A673 (cell line): ENCODE measurements at regions of chr21 and their contacts with region 1.

Region 1: DNA sequence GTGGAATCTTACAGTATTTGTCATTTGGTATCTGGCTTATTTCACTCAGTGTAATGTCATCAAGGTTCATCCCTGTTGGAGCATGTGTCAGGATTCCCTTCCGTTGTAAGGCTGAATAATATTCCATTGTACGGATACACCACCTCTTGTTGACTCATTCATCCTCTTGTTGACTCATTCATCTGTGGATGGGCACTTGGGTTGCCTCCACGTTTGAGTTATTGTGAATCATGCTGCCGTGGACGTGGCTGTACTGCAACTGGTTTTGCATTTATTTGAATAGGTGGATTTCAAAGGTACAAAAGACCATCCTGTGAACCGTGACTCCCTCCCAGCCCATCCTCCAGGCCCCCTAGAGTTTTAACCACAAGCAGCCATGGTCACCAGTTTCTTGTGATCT is 11.9 kb upstream of the TCP10L start:
- DNase-seq: peak; percentile 8
- H3K4me3 ChIP-seq: no peak overlapping the region
- H3K27ac ChIP-seq: no peak overlapping the region
- H3K4me1 ChIP-seq: no peaks in the 10 kb centered on the region
- H3K27me3 ChIP-seq: no peaks in the 10 kb centered on the region
- CTCF ChIP-seq: no peak

Region 2: GRCh38 chr21:32359711-32360260 is 237.4 kb before region 1 on chr21:
- CTCF ChIA-PET with region 1: interaction called, 16 read pairs
- POLR2A ChIA-PET with region 1: no interaction called
- intact Hi-C with region 1: no loop called
- DNase-seq: no peak
- H3K4me3 ChIP-seq: no peak overlapping the region
- H3K27ac ChIP-seq: no peak overlapping the region
- H3K4me1 ChIP-seq: no peaks in the 10 kb centered on the region
- H3K27me3 ChIP-seq: no peaks in the 10 kb centered on the region
- CTCF ChIP-seq: 0 out of 2 replicates have a peak, but pooled peaks have one; percentile 24

Region 3: GRCh38 chr21:32403201-32403777 is 193.9 kb before region 1 on chr21:
- CTCF ChIA-PET with region 1: interaction called, 56 read pairs
- POLR2A ChIA-PET with region 1: no interaction called
- intact Hi-C with region 1: loop called (anchors 1 kb)
- DNase-seq: peak; percentile 87
- H3K4me3 ChIP-seq: no peak overlapping the region
- H3K27ac ChIP-seq: no peak overlapping the region
- H3K4me1 ChIP-seq: no peaks in the 10 kb centered on the region
- H3K27me3 ChIP-seq: peaks cover 3% of the 10 kb centered on the region
- CTCF ChIP-seq: peak; percentile 81

Region 4: GRCh38 chr21:32578107-32578692 is 19.0 kb before region 1 on chr21:
- CTCF ChIA-PET with region 1: interaction called, 17 read pairs
- POLR2A ChIA-PET with region 1: no interaction called
- intact Hi-C with region 1: no loop called
- DNase-seq: peak; percentile 16
- H3K4me3 ChIP-seq: no peak overlapping the region
- H3K27ac ChIP-seq: no peak overlapping the region
- H3K4me1 ChIP-seq: no peaks in the 10 kb centered on the region
- H3K27me3 ChIP-seq: no peaks in the 10 kb centered on the region
- CTCF ChIP-seq: peak; percentile 49

Region 5: GRCh38 chr21:32674731-32675130 is 77.5 kb after region 1 on chr21:
- CTCF ChIA-PET with region 1: interaction called, 16 read pairs
- POLR2A ChIA-PET with region 1: no interaction called
- intact Hi-C with region 1: no loop called
- DNase-seq: no peak
- H3K4me3 ChIP-seq: no peak overlapping the region
- H3K27ac ChIP-seq: no peak overlapping the region
- H3K4me1 ChIP-seq: no peaks in the 10 kb centered on the region
- H3K27me3 ChIP-seq: no peaks in the 10 kb centered on the region
- CTCF ChIP-seq: no peak

Region 6: DNA sequence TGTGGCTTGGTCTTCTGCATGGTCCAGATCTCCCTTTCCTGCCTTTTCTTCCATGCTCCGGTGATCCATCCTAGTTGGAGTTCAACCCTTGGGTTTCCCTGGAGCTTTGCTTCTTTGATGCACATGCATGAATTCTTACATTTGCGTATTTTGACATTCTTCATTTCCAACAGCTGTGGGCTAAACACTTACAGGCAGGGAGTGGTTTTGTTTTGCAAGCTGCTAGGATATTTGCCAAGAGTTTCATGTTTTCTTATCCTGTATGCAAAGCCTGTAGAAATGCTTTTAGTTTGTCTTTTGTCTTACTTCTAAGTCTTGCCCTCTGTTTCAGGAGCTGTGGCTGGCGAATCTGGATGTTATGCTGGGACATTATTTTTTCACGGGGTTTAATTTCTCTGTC is 264.7 kb after region 1 on chr21:
- CTCF ChIA-PET with region 1: interaction called, 11 read pairs
- POLR2A ChIA-PET with region 1: no interaction called
- intact Hi-C with region 1: no loop called
- DNase-seq: no peak
- H3K4me3 ChIP-seq: no peak overlapping the region
- H3K27ac ChIP-seq: no peak overlapping the region
- H3K4me1 ChIP-seq: no peaks in the 10 kb centered on the region
- H3K27me3 ChIP-seq: peaks cover 58% of the 10 kb centered on the region
- CTCF ChIP-seq: no peak